ENCODE measurements at regions of chr10 and their contacts with region 1.

Region 1: DNA sequence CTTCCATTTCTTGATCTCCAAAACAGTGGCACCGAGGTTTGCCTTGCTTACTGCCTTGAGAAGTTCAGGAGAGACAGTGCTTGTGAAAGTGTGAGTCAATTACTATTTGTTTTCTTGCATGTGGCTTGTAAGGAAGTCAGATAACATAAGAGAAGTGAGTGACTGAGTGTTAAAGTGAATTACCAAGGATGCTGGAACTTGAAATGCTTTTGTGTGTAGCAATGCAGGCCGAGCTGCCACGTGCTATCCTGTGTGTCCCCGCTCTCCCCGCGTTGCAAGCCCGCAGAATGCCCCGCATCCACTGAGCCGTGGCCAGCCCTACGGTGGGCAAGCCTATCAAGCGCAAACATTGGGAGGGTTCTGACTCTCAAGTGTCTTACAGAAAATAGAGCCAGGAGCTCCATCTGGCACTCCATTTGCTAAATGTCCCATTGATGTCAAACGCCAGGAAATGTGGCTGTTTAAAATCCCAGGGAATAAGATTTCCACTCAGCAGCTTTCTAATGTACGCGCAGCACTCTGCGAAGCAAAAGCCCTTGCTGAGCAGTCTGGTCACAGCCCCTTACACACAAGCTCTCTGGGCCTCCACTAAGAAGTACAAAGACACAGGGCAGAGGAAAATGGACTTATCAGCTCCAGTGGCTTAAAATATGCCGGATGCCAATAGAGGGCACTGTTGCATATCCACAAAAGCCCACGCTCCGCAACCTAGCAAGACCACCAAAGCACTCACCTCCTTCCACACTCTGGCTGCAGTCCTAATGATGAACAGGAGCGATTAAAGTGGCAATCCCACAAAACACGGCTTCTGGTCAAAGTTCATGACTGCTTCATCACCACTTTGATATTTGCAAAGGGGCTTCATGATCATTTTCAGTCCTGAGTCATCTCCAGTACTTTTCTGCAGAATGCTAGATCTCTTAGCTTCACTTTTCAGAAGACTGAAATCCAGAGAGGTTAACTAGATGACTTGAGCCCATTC is 158.0 kb upstream of the ITGB1 start:
- DNase-seq: peak; percentile 64
- ATAC-seq: no peak
- H3K4me3 Mint-ChIP-seq: no peak overlapping the region
- H3K27ac Mint-ChIP-seq: peak overlapping the region; percentile 59
- H3K4me1 Mint-ChIP-seq: peaks cover 78% of the 10 kb centered on the region
- H3K27me3 Mint-ChIP-seq: no peaks in the 10 kb centered on the region
- CTCF ChIP-seq: peak; percentile 65

Region 2: GRCh38 chr10:32980558-32981468 is 135.2 kb before region 1 on chr10:
- CTCF ChIA-PET with region 1: no interaction called
- POLR2A ChIA-PET with region 1: no interaction called
- intact Hi-C with region 1: no loop called
- DNase-seq: peak; percentile 91
- ATAC-seq: peak; percentile 97
- H3K4me3 Mint-ChIP-seq: peak overlapping the region; percentile 79
- H3K27ac Mint-ChIP-seq: peak overlapping the region; percentile 90
- H3K4me1 Mint-ChIP-seq: peaks cover 27% of the 10 kb centered on the region
- H3K27me3 Mint-ChIP-seq: no peaks in the 10 kb centered on the region
- CTCF ChIP-seq: no peak

Region 3: GRCh38 chr10:33100781-33101391 is 15.1 kb before region 1 on chr10:
- CTCF ChIA-PET with region 1: interaction called, 11 read pairs
- POLR2A ChIA-PET with region 1: interaction called, 5 read pairs
- intact Hi-C with region 1: no loop called
- DNase-seq: no peak
- ATAC-seq: no peak
- H3K4me3 Mint-ChIP-seq: no peak overlapping the region
- H3K27ac Mint-ChIP-seq: peak overlapping the region; percentile 62
- H3K4me1 Mint-ChIP-seq: peaks cover 26% of the 10 kb centered on the region
- H3K27me3 Mint-ChIP-seq: peaks cover under 1% of the 10 kb centered on the region
- CTCF ChIP-seq: no peak

Region 4: DNA sequence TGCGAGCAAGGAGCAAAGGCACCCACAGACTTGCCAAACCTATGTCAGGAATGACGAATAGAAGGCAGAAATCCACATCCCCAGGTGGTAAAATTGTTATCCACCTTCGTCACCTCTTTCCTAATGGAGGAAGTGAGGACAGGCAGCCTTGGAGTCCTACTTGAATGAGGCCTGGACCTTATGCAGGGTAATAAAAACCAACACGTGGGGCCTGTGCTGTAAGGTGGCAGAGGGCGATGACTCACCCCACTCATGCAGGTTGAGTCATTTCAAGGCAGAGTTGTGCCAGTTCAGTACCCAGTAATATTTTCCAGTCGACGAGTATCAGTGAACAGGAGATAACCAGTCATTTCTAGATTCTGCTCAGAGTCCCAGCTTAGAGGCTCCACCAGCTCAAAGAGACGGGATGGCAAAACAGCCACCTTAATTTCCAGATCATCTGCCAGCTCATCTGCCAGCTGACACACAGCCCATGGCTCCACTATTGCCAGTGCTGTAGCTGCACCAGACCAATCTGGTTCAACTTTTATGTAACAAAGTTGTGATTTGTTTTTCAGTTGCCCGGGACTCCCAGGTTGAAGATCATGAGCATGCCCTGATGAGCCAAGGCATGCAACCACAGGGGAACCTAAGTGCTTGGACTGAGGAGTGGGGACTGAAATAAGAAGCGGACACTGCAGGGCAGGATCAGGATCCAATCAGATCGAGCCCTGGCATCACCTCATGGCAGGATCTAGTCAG is 18.2 kb after region 1 on chr10:
- CTCF ChIA-PET with region 1: interaction called, 17 read pairs
- POLR2A ChIA-PET with region 1: interaction called, 11 read pairs
- intact Hi-C with region 1: no loop called
- DNase-seq: peak; percentile 92
- ATAC-seq: peak; percentile 74
- H3K4me3 Mint-ChIP-seq: peak overlapping the region; percentile 10
- H3K27ac Mint-ChIP-seq: peak overlapping the region; percentile 92
- H3K4me1 Mint-ChIP-seq: peaks cover 69% of the 10 kb centered on the region
- H3K27me3 Mint-ChIP-seq: peaks cover 1% of the 10 kb centered on the region
- CTCF ChIP-seq: no peak

Region 5: GRCh38 chr10:33143160-33143728 is 27.2 kb after region 1 on chr10:
- CTCF ChIA-PET with region 1: interaction called, 6 read pairs
- POLR2A ChIA-PET with region 1: interaction called, 4 read pairs
- intact Hi-C with region 1: loop called (anchors 2 kb)
- DNase-seq: peak; percentile 83
- ATAC-seq: peak; percentile 72
- H3K4me3 Mint-ChIP-seq: no peak overlapping the region
- H3K27ac Mint-ChIP-seq: peak overlapping the region; percentile 90
- H3K4me1 Mint-ChIP-seq: peaks cover 47% of the 10 kb centered on the region
- H3K27me3 Mint-ChIP-seq: no peaks in the 10 kb centered on the region
- CTCF ChIP-seq: no peak

Measured in activated CD8-positive, alpha-beta T cell treated with anti-CD3 and anti-CD28 coated beads for 36 hours (primary cell).